CD14-positive monocyte (primary cell): ENCODE measurements at regions of chr10 and their contacts with region 1.

Region 1: DNA sequence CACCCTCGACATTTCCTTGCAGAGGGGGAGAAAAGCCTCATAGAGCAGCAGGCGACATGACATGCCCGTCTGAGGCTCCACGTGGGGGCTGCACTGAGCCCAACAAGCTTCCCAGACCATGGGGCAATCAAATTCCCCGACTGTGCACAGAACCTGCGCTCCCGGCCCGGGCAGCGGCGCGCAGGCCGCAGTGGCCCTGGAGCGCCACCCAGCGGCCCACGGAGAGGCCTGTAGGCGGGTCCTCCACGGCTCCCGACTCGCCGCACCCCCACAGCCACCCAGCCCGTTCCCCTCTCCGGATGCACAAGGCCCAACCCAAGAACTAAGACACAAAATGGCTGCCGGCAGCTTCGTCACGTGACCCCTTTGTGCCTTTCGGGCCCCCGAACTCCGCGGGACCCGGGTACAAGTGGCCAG is 816 bp downstream of the EPC1 start:
- DNase-seq: peak; percentile 92 to 98 (median 94)
- H3K4me3 ChIP-seq: peak overlapping the region; percentile 82 to 95 (median 84)
- H3K4me3 Mint-ChIP-seq: peak overlapping the region; percentile 86 to 95
- H3K27ac ChIP-seq: peak overlapping the region; percentile 100
- H3K27ac Mint-ChIP-seq: peak overlapping the region; percentile 99 to 100 (median 100)
- H3K4me1 ChIP-seq: peaks cover 17 to 34% of the 10 kb centered on the region in 2 donors
- H3K4me1 Mint-ChIP-seq: peaks cover 42% of the 10 kb centered on the region
- H3K27me3 ChIP-seq: no peaks in the 10 kb centered on the region
- H3K27me3 Mint-ChIP-seq: peaks cover 1 to 4% (median 3%) of the 10 kb centered on the region in 3 donors
- CTCF ChIP-seq: peak; percentile 89

Region 2: DNA sequence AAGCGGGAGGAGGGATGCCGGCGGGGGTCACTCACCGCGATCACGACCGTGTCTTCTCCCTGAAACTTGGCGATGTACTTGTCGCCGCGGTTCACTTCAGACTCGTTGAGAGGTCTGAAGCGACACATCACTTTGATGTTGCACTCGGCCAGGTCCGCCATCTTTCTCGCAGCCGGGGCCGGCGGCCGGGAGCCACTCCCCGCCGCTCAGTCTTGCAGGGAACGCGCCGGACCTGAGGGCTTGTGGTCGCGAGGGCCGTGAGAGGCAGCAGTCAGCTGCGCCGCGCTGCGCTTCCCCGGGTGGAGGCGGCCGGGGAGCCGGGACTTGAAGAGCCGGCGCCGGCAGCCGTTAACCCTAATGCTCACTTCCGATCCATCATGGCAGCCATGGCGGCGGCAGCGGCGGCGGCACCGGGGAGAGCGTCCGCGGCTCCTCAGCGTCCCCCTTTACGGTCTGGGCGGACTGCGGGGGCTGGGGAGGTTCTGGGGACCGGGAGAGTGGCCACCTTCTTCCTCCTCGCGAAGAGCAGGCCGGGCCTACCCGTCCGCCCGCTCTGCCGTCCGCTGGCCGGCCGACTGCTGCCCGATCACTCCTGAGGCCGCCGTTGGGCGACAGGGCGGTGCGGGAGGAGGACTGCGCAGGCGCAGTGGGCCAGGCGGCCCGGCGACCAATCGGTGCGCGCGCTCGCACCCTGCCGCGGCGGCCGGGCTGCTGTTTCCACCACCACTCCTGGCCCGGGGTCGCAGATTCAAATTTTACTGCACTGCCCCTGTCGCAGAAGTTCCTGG is 290.1 kb before region 1 on chr10 and contains the start of gene KIF5B:
- intact Hi-C with region 1: loop called in 1 of 2 experiments (anchors 10 kb)
- DNase-seq: peak; percentile 83 to 87 (median 85)
- H3K4me3 ChIP-seq: peak within 1 kb of the TSS; percentile 81 to 98 (median 98)
- H3K4me3 Mint-ChIP-seq: peak within 1 kb of the TSS; percentile 95 to 97
- H3K27ac ChIP-seq: peak within 1 kb of the TSS; percentile 93 to 94
- H3K27ac Mint-ChIP-seq: peak within 1 kb of the TSS; percentile 89 to 97 (median 92)
- H3K4me1 ChIP-seq: peaks cover 45 to 61% of the 10 kb centered on the region in 2 donors
- H3K4me1 Mint-ChIP-seq: peaks cover 56% of the 10 kb centered on the region
- H3K27me3 ChIP-seq: no peaks in the 10 kb centered on the region
- H3K27me3 Mint-ChIP-seq: peaks cover 0 to 1% (median 0%) of the 10 kb centered on the region in 3 donors
- CTCF ChIP-seq: no peak
- polyA plus RNA-seq, gene KIF5B: 15.2 to 32.9 (median 18.9) TPM

Region 3: DNA sequence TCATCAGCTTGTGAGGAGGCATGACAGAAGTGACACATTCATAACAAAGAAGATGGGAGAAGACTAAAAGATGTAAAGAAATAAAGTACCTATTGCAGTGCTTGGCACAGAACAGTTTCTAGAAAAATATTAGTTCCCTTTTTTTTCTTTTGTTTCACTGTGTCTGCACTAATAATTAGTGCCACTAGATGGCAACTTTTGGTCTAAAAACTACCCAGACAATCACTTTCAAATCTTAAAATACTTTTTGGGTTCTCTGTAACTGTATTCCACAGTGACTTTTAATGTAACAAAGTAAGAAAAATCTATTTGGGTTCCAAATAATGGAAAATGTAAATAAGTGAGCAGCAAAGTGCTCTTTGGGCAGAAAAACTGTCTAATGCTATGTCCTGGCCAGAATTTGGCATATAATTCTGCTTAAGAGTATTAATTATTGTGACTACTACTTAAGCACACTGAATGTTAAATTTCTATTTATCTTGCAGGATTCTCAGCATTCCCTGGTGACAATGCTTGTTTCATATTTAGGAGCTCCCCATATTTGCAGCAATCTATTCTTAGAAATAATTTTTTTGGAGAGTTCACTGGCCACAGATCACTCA is 155.2 kb before region 1 on chr10:
- intact Hi-C with region 1: loop called in 1 of 2 experiments (anchors 10 kb)
- DNase-seq: peak; percentile 31 to 61 (median 35)
- H3K4me3 ChIP-seq: no peak overlapping the region
- H3K4me3 Mint-ChIP-seq: no peak overlapping the region
- H3K27ac ChIP-seq: no peak overlapping the region
- H3K27ac Mint-ChIP-seq: peak overlapping the region in 2 of 7 donors; percentile 30 to 72
- H3K4me1 ChIP-seq: peaks cover under 1 to 17% of the 10 kb centered on the region in 2 donors
- H3K4me1 Mint-ChIP-seq: peaks cover 15% of the 10 kb centered on the region
- H3K27me3 ChIP-seq: no peaks in the 10 kb centered on the region
- H3K27me3 Mint-ChIP-seq: peaks cover 0 to 4% (median 0%) of the 10 kb centered on the region in 3 donors
- CTCF ChIP-seq: peak; percentile 78

Region 4: GRCh38 chr10:32256613-32257437 is 89.3 kb before region 1 on chr10:
- intact Hi-C with region 1: loop called (anchors 5 kb)
- DNase-seq: peak; percentile 58 to 69 (median 69)
- H3K4me3 ChIP-seq: no peak overlapping the region
- H3K4me3 Mint-ChIP-seq: peak overlapping the region in 1 of 2 donors; percentile 42
- H3K27ac ChIP-seq: no peak overlapping the region
- H3K27ac Mint-ChIP-seq: peak overlapping the region in 1 of 7 donors; percentile 57
- H3K4me1 ChIP-seq: peaks cover 15 to 17% of the 10 kb centered on the region in 2 donors
- H3K4me1 Mint-ChIP-seq: peaks cover 26% of the 10 kb centered on the region
- H3K27me3 ChIP-seq: no peaks in the 10 kb centered on the region
- H3K27me3 Mint-ChIP-seq: peaks cover 0 to 6% (median 0%) of the 10 kb centered on the region in 3 donors
- CTCF ChIP-seq: peak; percentile 90

Region 5: GRCh38 chr10:32271617-32272016 is 74.5 kb before region 1 on chr10:
- intact Hi-C with region 1: loop called in 1 of 2 experiments (anchors 5 kb)
- DNase-seq: no peak
- H3K4me3 ChIP-seq: no peak overlapping the region
- H3K4me3 Mint-ChIP-seq: no peak overlapping the region
- H3K27ac ChIP-seq: no peak overlapping the region
- H3K27ac Mint-ChIP-seq: peak overlapping the region in 2 of 7 donors; percentile 34 to 43
- H3K4me1 ChIP-seq: peaks cover 8 to 22% of the 10 kb centered on the region in 2 donors
- H3K4me1 Mint-ChIP-seq: peaks cover 15% of the 10 kb centered on the region
- H3K27me3 ChIP-seq: no peaks in the 10 kb centered on the region
- H3K27me3 Mint-ChIP-seq: no peaks in the 10 kb centered on the region
- CTCF ChIP-seq: no peak

Region 6: DNA sequence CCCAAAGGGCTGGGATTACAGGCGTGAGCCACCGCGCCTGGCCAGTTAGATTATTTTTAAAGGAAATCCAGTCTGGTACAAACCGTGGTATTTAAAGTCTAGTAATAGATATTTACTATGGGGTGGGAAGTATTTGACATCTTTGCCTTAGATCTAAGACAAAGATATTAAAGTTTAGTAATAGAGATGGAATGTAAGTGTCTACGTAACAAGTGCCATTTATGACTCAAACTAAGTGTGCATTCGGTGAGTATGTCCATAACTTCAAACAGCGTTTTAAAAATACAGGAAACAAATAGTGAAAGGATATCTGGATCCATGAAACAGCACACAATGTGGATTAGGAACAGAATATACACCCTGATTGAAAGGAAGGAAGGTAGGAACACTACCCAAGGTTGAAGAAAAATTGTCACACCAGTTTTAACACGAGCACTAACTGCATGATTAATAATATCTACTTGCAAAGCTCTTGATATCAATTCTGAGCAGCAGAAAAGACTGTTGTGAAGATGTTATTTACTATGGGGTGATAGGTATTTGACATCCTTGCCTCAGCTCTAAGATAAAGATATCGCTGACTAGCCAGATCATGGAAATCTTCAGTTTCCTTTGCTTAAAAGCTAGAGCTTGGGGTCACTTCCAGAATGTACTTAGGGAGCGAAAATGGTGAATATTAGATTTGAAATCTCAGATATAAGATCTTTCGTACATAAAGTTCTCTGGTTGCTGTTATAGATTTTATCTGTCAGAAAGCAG is 47.9 kb before region 1 on chr10:
- intact Hi-C with region 1: loop called in 1 of 2 experiments (anchors 10 kb)
- DNase-seq: no peak
- H3K4me3 ChIP-seq: no peak overlapping the region
- H3K4me3 Mint-ChIP-seq: no peak overlapping the region
- H3K27ac ChIP-seq: no peak overlapping the region
- H3K27ac Mint-ChIP-seq: peak overlapping the region in 3 of 7 donors; percentile 27 to 46 (median 39)
- H3K4me1 ChIP-seq: no peaks in the 10 kb centered on the region
- H3K4me1 Mint-ChIP-seq: no peaks in the 10 kb centered on the region
- H3K27me3 ChIP-seq: no peaks in the 10 kb centered on the region
- H3K27me3 Mint-ChIP-seq: no peaks in the 10 kb centered on the region
- CTCF ChIP-seq: no peak

Region 7: GRCh38 chr10:32318476-32318896 is 27.7 kb before region 1 on chr10:
- intact Hi-C with region 1: loop called in 1 of 2 experiments (anchors 2 kb)
- DNase-seq: peak; percentile 95 to 98 (median 96)
- H3K4me3 ChIP-seq: no peak overlapping the region
- H3K4me3 Mint-ChIP-seq: peak overlapping the region; percentile 34 to 57
- H3K27ac ChIP-seq: peak overlapping the region in 1 of 2 donors; percentile 87
- H3K27ac Mint-ChIP-seq: peak overlapping the region; percentile 94 to 98 (median 96)
- H3K4me1 ChIP-seq: peaks cover 35 to 49% of the 10 kb centered on the region in 2 donors
- H3K4me1 Mint-ChIP-seq: peaks cover 72% of the 10 kb centered on the region
- H3K27me3 ChIP-seq: no peaks in the 10 kb centered on the region
- H3K27me3 Mint-ChIP-seq: no peaks in the 10 kb centered on the region
- CTCF ChIP-seq: no peak

Region 8: DNA sequence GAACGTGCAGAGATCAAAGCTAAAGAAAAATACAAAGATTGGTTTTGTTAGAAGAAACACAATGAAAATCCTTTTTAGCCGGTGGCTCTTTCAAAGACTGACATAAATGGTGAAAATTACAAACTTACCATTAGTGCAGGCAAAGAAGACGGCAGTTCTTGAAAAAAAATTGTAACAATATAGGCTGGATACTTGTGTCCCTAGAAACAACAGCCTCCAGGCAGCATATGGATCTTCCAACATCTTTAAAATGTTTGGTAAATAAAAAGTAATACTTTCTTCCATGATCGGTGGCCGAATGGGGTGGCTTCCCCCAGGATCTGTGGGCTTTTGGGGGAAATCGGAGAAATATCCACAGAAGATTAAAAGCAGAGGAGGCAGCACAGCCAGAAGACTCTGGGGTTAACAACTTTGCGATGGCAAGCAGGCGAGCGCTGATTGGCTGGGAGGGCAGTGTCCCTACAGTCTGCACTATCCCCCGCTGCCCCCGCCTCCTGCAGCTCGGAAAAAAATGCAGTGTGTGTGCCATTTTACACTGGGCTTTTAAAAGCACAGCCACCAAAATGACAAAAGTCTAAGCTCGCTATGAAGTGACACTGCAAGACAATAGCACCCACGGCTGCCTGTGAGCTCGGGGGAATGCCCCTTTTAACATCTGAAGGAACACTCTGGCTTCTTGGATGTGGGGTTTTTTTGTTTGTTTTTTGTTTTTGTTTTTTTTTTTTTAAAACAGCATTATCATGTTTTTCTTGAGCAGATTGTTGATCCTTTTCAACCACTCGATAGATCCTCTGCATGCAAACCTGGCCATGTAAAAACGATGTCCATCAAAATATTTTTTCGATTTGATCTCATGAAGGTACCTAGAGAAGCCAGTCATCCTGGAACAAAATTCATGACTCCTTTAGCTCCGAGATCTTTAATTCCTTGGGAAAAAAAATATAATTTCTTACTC is 32.5 kb after region 1 on chr10:
- intact Hi-C with region 1: no loop called
- DNase-seq: peak; percentile 84 to 87 (median 85)
- H3K4me3 ChIP-seq: peak overlapping the region; percentile 74 to 97 (median 87)
- H3K4me3 Mint-ChIP-seq: no peak overlapping the region
- H3K27ac ChIP-seq: peak overlapping the region; percentile 65 to 93
- H3K27ac Mint-ChIP-seq: no peak overlapping the region
- H3K4me1 ChIP-seq: peaks cover 8 to 18% of the 10 kb centered on the region in 2 donors
- H3K4me1 Mint-ChIP-seq: peaks cover 13% of the 10 kb centered on the region
- H3K27me3 ChIP-seq: no peaks in the 10 kb centered on the region
- H3K27me3 Mint-ChIP-seq: peaks cover 0 to 1% (median 1%) of the 10 kb centered on the region in 3 donors
- CTCF ChIP-seq: no peak